ENCODE measurements at regions of chr9 and their contacts with region 1.

Region 1: GRCh38 chr9:88747768-88748167 is 212.8 kb downstream of the NXNL2 start:
- DNase-seq: peak; percentile 24
- H3K4me3 ChIP-seq: no peak overlapping the region
- H3K27ac ChIP-seq: peak overlapping the region; percentile 15 to 62
- H3K4me1 ChIP-seq: no peaks in the 10 kb centered on the region
- H3K27me3 ChIP-seq: no peaks in the 10 kb centered on the region
- CTCF ChIP-seq: no peak
- POLR2A ChIP-seq: no peak

Region 2: DNA sequence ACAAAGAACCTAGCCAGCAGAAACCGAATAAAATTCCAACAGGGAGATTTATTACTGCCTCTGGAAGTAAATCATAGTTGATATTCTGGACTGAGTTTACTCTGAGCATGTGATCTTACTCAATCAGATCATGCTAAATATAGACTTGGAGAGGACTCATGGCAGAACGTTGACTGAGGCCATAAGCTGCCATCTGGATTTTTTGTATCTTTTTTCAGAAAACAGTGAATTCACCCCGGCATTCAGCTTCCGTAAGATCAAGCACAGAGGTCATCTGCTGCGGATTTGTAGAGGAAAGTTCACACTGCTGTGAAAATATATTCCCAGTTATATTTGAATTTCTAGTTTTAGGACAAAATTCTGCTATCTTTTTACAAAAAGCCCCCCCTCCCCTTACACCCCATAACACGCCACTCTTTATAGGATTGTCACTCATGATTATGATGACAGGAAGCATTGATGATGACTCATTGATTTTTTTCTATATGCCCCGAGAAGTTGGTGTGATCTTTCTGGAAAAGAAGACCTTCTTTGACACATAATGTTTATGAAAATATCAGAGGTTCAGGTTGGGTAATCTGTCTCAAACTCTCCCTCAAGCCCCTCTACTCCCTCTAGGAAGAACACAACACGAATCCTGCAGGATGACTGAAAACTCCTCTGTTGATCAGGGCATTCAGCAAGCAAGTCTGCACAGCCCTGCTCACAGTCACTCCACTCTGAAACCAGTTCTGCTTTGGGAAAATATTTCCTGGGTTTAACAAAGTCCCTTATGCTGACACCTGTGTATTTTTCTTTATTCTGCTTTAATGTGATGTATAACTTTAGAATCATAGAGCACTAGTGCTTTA is 142.0 kb before region 1 on chr9:
- intact Hi-C with region 1: loop called (anchors 5 kb)
- DNase-seq: no peak
- H3K4me3 ChIP-seq: no peak overlapping the region
- H3K27ac ChIP-seq: peak overlapping the region; percentile 62 to 72
- H3K4me1 ChIP-seq: peaks cover 13% of the 10 kb centered on the region
- H3K27me3 ChIP-seq: no peaks in the 10 kb centered on the region
- CTCF ChIP-seq: no peak
- POLR2A ChIP-seq: no peak

Region 3: DNA sequence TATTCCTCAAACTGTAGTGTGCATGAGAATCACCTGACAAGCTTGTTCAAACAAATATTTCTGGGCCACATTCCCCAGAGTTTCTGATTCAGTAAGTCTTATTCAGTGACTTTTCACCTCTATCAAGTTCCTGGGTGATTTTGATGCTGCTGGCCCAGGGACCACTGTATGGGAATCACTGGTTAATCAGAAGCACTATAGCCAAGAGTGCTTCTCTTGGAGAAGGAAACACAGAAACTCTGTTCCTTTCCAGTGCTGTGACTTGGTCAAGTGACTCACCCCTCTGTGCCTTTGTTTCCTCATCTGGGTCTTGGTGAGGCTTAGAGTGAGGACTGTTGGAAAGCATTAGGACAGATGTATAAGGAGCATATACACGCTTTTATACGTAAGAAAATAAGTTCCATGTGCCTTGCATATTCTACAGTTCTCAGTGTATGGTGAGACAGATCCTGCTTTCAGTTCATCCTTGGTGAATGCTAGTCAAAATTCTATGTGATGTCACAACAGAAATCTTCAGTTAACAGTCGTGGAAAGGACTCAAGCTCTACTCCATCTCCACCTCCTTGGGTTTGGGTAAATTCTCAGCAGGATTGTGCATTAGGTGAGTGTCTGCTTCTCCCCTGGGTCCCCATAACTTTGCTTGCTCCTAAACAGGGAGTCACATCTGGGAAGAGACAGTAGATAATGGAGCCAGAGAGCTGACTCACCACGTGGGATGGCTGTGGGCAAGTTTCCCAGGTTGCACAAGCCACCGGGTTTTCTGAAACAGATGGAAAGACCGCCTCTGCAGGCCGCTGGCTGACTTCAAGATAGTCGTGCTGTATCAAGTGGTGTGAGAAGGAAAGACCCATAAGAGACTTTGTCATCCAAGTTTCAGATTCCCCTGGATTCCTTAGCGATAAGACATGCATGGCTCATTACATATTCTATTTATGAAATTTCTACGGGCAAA is 95.8 kb before region 1 on chr9:
- intact Hi-C with region 1: loop called (anchors 10 kb)
- DNase-seq: peak; percentile 29
- H3K4me3 ChIP-seq: no peak overlapping the region
- H3K27ac ChIP-seq: peak overlapping the region in 1 of 2 donors; percentile 19
- H3K4me1 ChIP-seq: no peaks in the 10 kb centered on the region
- H3K27me3 ChIP-seq: no peaks in the 10 kb centered on the region
- CTCF ChIP-seq: no peak
- POLR2A ChIP-seq: no peak

Region 4: GRCh38 chr9:88781628-88782391 is 34.0 kb after region 1 on chr9:
- intact Hi-C with region 1: loop called (anchors 5 kb)
- DNase-seq: no peak
- H3K4me3 ChIP-seq: no peak overlapping the region
- H3K27ac ChIP-seq: no peak overlapping the region
- H3K4me1 ChIP-seq: no peaks in the 10 kb centered on the region
- H3K27me3 ChIP-seq: no peaks in the 10 kb centered on the region
- CTCF ChIP-seq: no peak
- POLR2A ChIP-seq: no peak

Region 5: GRCh38 chr9:88814577-88814976 is 66.8 kb after region 1 on chr9:
- intact Hi-C with region 1: loop called (anchors 10 kb)
- DNase-seq: no peak
- H3K4me3 ChIP-seq: no peak overlapping the region
- H3K27ac ChIP-seq: no peak overlapping the region
- H3K4me1 ChIP-seq: no peaks in the 10 kb centered on the region
- H3K27me3 ChIP-seq: no peaks in the 10 kb centered on the region
- CTCF ChIP-seq: no peak
- POLR2A ChIP-seq: no peak

Region 6: GRCh38 chr9:88949425-88949824 is 201.7 kb after region 1 on chr9:
- intact Hi-C with region 1: loop called (anchors 5 kb)
- DNase-seq: no peak
- H3K4me3 ChIP-seq: no peak overlapping the region
- H3K27ac ChIP-seq: no peak overlapping the region
- H3K4me1 ChIP-seq: no peaks in the 10 kb centered on the region
- H3K27me3 ChIP-seq: no peaks in the 10 kb centered on the region
- CTCF ChIP-seq: no peak
- POLR2A ChIP-seq: no peak

Region 7: DNA sequence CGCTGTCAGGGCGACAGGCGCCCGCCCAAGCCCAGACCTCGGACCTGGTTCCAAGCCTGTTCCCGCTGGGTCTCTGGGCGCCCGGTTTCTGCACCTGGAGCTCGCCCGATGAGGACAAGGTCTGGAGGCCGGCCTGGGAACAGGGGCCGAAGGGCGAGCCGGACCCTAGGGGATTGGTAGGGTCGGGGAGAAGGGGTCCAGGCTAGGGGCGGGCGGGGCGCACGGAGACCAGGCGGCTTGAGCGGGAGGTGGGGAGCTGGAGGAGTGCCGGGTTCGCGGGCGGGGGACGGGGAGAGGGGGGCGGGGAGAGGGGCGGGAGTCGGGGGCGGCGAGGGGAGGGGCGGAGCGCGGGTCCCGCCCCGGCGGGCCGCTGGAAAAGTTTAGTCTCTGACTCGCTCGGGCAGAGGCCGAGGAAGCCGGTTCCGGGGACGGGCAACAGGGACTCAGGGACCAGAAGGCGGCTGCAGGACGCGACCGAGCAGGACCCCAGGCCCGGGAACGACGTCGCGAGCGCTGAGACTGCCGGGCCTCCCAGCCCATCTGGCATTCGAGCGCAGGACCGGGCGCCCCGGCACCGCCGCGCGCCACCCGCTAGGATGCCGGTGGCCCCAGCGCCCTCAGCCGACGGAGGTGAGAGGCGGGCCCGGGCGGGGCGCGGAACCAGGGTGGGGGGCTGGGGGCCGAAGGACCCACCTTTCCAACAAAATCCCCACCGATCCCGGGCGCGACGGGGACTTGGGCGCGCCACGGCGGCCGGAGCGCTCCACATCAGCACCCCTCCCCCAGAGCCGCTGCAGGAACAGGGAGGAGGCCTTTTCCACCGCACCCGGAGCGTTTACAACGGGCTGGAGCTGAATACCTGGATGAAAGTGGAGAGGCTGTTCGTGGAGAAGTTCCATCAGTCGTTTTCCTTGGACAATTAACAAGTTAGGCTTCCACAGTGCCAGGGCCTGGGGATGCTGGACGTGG is 243.6 kb after region 1 on chr9 and contains the start of gene S1PR3:
- intact Hi-C with region 1: loop called (anchors 2 kb)
- DNase-seq: peak; percentile 69
- H3K4me3 ChIP-seq: peak within 1 kb of the TSS; percentile 54 to 64
- H3K27ac ChIP-seq: peak within 1 kb of the TSS; percentile 68 to 71
- H3K4me1 ChIP-seq: no peaks in the 10 kb centered on the region
- H3K27me3 ChIP-seq: no peaks in the 10 kb centered on the region
- CTCF ChIP-seq: peak in 1 of 4 experiments; percentile 5
- POLR2A ChIP-seq: peak; percentile 78
- total RNA-seq, gene S1PR3: 8.2 to 16.3 TPM